ENCODE measurements at regions of chr12 and their contacts with region 1.

Region 1: GRCh38 chr12:96344124-96344695 is 56.0 kb downstream of the CDK17 start:
- DNase-seq: no peak
- ATAC-seq: no peak
- H3K4me3 ChIP-seq: no peak overlapping the region
- H3K4me3 Mint-ChIP-seq: no peak overlapping the region
- H3K27ac ChIP-seq: no peak overlapping the region
- H3K27ac Mint-ChIP-seq: no peak overlapping the region
- H3K4me1 ChIP-seq: peaks cover 28% of the 10 kb centered on the region
- H3K4me1 Mint-ChIP-seq: peaks cover 62% of the 10 kb centered on the region
- H3K27me3 ChIP-seq: no peaks in the 10 kb centered on the region
- H3K27me3 Mint-ChIP-seq: no peaks in the 10 kb centered on the region
- CTCF ChIP-seq: no peak

Region 2: GRCh38 chr12:95481072-95481471 is 863.1 kb before region 1 on chr12:
- CTCF ChIA-PET with region 1: no interaction called
- POLR2A ChIA-PET with region 1: no interaction called
- intact Hi-C with region 1: no loop called
- DNase-seq: peak in 1 of 9 experiments; percentile 8
- ATAC-seq: no peak
- H3K4me3 ChIP-seq: no peak overlapping the region
- H3K4me3 Mint-ChIP-seq: no peak overlapping the region
- H3K27ac ChIP-seq: peak overlapping the region in 1 of 2 experiments; percentile 12
- H3K27ac Mint-ChIP-seq: peak overlapping the region; percentile 63
- H3K4me1 ChIP-seq: peaks cover 29% of the 10 kb centered on the region
- H3K4me1 Mint-ChIP-seq: peaks cover 60% of the 10 kb centered on the region
- H3K27me3 ChIP-seq: no peaks in the 10 kb centered on the region
- H3K27me3 Mint-ChIP-seq: no peaks in the 10 kb centered on the region
- CTCF ChIP-seq: no peak

Region 3: GRCh38 chr12:96375841-96376604 is 31.8 kb after region 1 on chr12:
- CTCF ChIA-PET with region 1: no interaction called
- POLR2A ChIA-PET with region 1: interaction called, 4 read pairs
- intact Hi-C with region 1: loop called in 1 of 2 experiments (anchors 2 kb)
- DNase-seq: no peak
- ATAC-seq: no peak
- H3K4me3 ChIP-seq: no peak overlapping the region
- H3K4me3 Mint-ChIP-seq: peak overlapping the region; percentile 44
- H3K27ac ChIP-seq: peak overlapping the region in 1 of 2 experiments; percentile 79
- H3K27ac Mint-ChIP-seq: peak overlapping the region; percentile 83
- H3K4me1 ChIP-seq: peaks cover 65% of the 10 kb centered on the region
- H3K4me1 Mint-ChIP-seq: peaks cover 83% of the 10 kb centered on the region
- H3K27me3 ChIP-seq: no peaks in the 10 kb centered on the region
- H3K27me3 Mint-ChIP-seq: no peaks in the 10 kb centered on the region
- CTCF ChIP-seq: no peak

Region 4: DNA sequence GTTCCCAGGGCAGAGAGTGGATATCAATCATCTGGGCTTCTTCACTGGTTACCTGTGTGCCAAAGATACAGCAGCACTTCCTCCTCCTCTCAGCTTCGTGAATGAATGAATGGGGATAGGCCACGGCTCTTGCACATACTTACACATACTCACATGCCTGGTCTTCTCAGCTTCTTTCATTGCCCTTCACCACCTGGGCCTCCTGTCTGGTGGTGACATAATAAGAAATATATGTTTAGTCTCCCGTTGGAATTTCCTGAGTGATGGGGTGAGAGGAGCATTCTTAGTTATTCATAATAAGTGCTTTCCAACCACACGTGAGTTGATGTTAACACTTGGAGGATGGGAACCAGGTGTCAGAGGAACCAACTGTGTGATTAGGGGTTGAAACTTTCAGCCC is 850.3 kb after region 1 on chr12:
- CTCF ChIA-PET with region 1: no interaction called
- POLR2A ChIA-PET with region 1: no interaction called
- intact Hi-C with region 1: no loop called
- DNase-seq: no peak
- ATAC-seq: no peak
- H3K4me3 ChIP-seq: no peak overlapping the region
- H3K4me3 Mint-ChIP-seq: no peak overlapping the region
- H3K27ac ChIP-seq: no peak overlapping the region
- H3K27ac Mint-ChIP-seq: no peak overlapping the region
- H3K4me1 ChIP-seq: no peaks in the 10 kb centered on the region
- H3K4me1 Mint-ChIP-seq: no peaks in the 10 kb centered on the region
- H3K27me3 ChIP-seq: no peaks in the 10 kb centered on the region
- H3K27me3 Mint-ChIP-seq: peaks cover under 1% of the 10 kb centered on the region
- CTCF ChIP-seq: no peak

Measured in CD8-positive, alpha-beta T cell (primary cell).